IMR-90 (cell line): ENCODE measurements at regions of chr18 and their contacts with region 1.

Region 1: GRCh38 chr18:59070181-59070912 is 69.3 kb upstream of the SEC11C start:
- DNase-seq: peak; percentile 69
- ATAC-seq: peak; percentile 96
- H3K4me3 ChIP-seq: no peak overlapping the region
- H3K27ac ChIP-seq: no peak overlapping the region
- H3K4me1 ChIP-seq: no peaks in the 10 kb centered on the region
- H3K27me3 ChIP-seq: peaks cover 6% of the 10 kb centered on the region
- CTCF ChIP-seq: peak; percentile 87
- POLR2A ChIP-seq: no peak
- RAD21 ChIP-seq: peak; percentile 89

Region 2: GRCh38 chr18:58310517-58310916 is 759.8 kb before region 1 on chr18:
- CTCF ChIA-PET with region 1: no interaction called
- POLR2A ChIA-PET with region 1: no interaction called
- dilution Hi-C with region 1: no loop called
- in situ Hi-C with region 1: no loop called
- intact Hi-C with region 1: no loop called
- DNase-seq: no peak
- ATAC-seq: no peak
- H3K4me3 ChIP-seq: no peak overlapping the region
- H3K27ac ChIP-seq: no peak overlapping the region
- H3K4me1 ChIP-seq: peaks cover 6% of the 10 kb centered on the region; the same call in 1 of the 2 replicates
- H3K27me3 ChIP-seq: peaks cover 4% of the 10 kb centered on the region
- CTCF ChIP-seq: no peak
- POLR2A ChIP-seq: no peak
- RAD21 ChIP-seq: no peak

Region 3: GRCh38 chr18:58768293-58768974 is 301.9 kb before region 1 on chr18:
- CTCF ChIA-PET with region 1: interaction called, 26 read pairs
- POLR2A ChIA-PET with region 1: interaction called, 4 read pairs
- dilution Hi-C with region 1: no loop called
- in situ Hi-C with region 1: no loop called
- intact Hi-C with region 1: loop called (anchors 1 kb)
- DNase-seq: peak; percentile 48
- ATAC-seq: peak; percentile 92
- H3K4me3 ChIP-seq: 0 out of 2 replicates have a peak overlapping the region, but pooled peaks have one; percentile 20
- H3K27ac ChIP-seq: no peak overlapping the region
- H3K4me1 ChIP-seq: peaks cover 4% of the 10 kb centered on the region; the same call in 1 of the 2 replicates
- H3K27me3 ChIP-seq: peaks cover 28% of the 10 kb centered on the region
- CTCF ChIP-seq: peak; percentile 79
- POLR2A ChIP-seq: no peak
- RAD21 ChIP-seq: peak; percentile 87

Region 4: GRCh38 chr18:59566533-59566971 is 496.2 kb after region 1 on chr18:
- CTCF ChIA-PET with region 1: no interaction called
- POLR2A ChIA-PET with region 1: no interaction called
- dilution Hi-C with region 1: no loop called
- in situ Hi-C with region 1: no loop called
- intact Hi-C with region 1: no loop called
- DNase-seq: peak; percentile 82
- ATAC-seq: peak; percentile 76
- H3K4me3 ChIP-seq: no peak overlapping the region
- H3K27ac ChIP-seq: peak overlapping the region; percentile 60; the same call in 1 of the 2 replicates
- H3K4me1 ChIP-seq: peaks cover 17% of the 10 kb centered on the region; the same call in 1 of the 2 replicates
- H3K27me3 ChIP-seq: no peaks in the 10 kb centered on the region
- CTCF ChIP-seq: no peak
- POLR2A ChIP-seq: no peak
- RAD21 ChIP-seq: no peak